Activated CD4-positive, alpha-beta memory T cell treated with anti-CD3 and anti-CD28 coated beads for 36 hours (primary cell): ENCODE measurements at regions of chr5 and their contacts with region 1.

Region 1: GRCh38 chr5:35863159-35863558 is 6.5 kb downstream of the IL7R start:
- DNase-seq: peak; percentile 59
- H3K4me3 Mint-ChIP-seq: peak overlapping the region; percentile 78
- H3K27ac Mint-ChIP-seq: peak overlapping the region; percentile 95
- H3K4me1 Mint-ChIP-seq: peaks cover 78% of the 10 kb centered on the region
- H3K27me3 Mint-ChIP-seq: no peaks in the 10 kb centered on the region

Region 2: DNA sequence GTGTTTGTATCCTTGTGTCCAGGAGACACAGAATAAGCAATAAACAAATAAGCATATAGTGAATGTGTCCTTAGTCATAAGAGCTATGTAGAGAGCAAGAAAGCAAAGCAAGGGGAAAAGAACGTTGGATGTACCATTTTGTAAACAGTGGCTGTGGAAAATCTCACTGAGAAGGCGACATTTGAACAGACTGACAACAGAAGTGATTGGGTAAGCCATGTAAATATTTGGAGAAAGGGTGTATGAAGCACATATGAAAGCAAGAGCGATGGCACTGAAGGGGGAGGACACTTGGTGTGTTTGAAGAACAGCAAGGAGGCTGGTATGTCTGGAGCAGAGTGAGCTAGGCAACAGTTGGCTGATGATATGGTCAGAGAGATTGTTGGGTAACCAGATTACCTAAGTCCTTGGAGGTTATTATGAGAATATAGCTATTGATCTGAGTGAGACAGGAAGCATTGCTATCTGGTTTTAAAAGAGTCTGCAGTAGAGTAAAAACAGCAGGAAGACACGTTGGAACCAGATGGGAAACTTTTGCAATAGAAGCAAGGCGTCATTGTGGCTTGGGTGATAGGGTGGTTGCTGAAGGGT is 121.9 kb before region 1 on chr5:
- CTCF ChIA-PET with region 1: no interaction called
- POLR2A ChIA-PET with region 1: no interaction called
- intact Hi-C with region 1: no loop called
- DNase-seq: no peak
- H3K4me3 Mint-ChIP-seq: no peak overlapping the region
- H3K27ac Mint-ChIP-seq: peak overlapping the region; percentile 16
- H3K4me1 Mint-ChIP-seq: peaks cover 47% of the 10 kb centered on the region
- H3K27me3 Mint-ChIP-seq: no peaks in the 10 kb centered on the region

Region 3: GRCh38 chr5:35876921-35877320 is 13.8 kb after region 1 on chr5:
- CTCF ChIA-PET with region 1: interaction called, 8 read pairs
- POLR2A ChIA-PET with region 1: interaction called, 5 read pairs
- intact Hi-C with region 1: loop called (anchors 2 kb)
- DNase-seq: no peak
- H3K4me3 Mint-ChIP-seq: no peak overlapping the region
- H3K27ac Mint-ChIP-seq: peak overlapping the region; percentile 80
- H3K4me1 Mint-ChIP-seq: peaks cover 79% of the 10 kb centered on the region
- H3K27me3 Mint-ChIP-seq: no peaks in the 10 kb centered on the region